Heart right ventricle (tissue), 16 donors: ENCODE measurements at regions of chr6 and their contacts with region 1.

Region 1: DNA sequence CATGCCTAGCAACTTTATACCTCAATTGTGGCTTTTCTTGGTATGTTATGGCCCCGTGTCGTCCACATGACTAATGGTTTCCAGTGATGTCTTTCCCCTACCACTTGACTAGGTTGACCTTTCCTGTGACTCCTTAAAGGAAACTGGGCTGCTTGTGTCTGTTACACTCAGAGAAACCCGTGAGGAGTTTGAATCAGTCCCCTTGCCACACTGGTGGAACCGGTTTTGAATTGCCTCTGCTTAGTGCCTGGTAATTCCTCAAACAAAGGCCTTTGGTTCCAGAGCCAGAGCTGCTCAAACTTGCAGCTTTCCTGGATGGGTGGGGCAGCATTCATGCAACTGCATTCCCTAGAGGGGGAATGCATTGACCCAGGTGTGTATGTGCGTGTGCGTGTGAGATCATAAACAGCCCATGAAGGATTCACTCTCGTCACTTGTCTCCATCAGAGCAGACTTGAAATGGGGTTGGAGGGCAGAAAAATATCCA is 22.0 kb downstream of the ECT2L start:
- DNase-seq: no peak
- ATAC-seq: peak in 2 of 8 donors; percentile 27 to 43
- H3K4me3 ChIP-seq: no peak overlapping the region
- H3K27ac ChIP-seq: no peak overlapping the region
- H3K4me1 ChIP-seq: peaks cover 0 to 17% (median 0%) of the 10 kb centered on the region in 9 donors
- H3K27me3 ChIP-seq: no peaks in the 10 kb centered on the region
- CTCF ChIP-seq: no peak

Region 2: DNA sequence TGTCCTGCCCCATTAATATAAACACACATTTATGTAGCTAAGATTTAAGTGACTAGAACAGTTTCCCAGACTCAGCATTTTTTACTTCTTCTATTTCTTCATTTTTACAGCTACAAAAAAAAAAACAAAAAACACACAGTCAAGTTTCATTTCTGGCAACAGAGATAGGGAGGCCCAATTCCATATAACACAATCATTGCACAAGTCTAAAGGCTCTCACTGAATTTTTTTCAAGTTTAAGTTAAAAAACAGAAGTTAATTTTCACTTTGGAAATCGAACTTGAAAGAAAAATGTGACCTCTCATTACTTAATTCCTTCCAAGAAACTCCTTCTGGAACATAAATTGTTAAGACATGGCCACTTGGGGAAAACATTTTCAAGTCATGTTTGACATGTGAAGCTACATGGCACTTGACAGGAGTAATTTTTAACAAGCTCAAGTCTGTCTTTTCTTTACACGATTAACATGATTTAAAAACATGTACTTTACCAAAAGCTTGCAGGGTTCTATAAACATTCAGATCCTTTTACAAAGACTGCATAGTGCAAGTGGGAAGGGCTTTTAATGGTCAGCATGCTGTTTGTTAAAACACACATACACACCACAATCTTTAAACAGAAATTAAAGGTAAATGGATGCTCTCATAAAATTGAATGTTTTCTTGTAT is 144.4 kb before region 1 on chr6:
- intact Hi-C with region 1: no loop called
- DNase-seq: no peak
- ATAC-seq: peak in 1 of 8 donors; percentile 20
- H3K4me3 ChIP-seq: no peak overlapping the region
- H3K27ac ChIP-seq: peak overlapping the region in 1 of 10 donors; percentile 60
- H3K4me1 ChIP-seq: no peaks in the 10 kb centered on the region
- H3K27me3 ChIP-seq: no peaks in the 10 kb centered on the region
- CTCF ChIP-seq: no peak

Region 3: GRCh38 chr6:138923561-138923960 is 105.7 kb after region 1 on chr6:
- intact Hi-C with region 1: loop called in 1 of 10 experiments (anchors 10 kb)
- DNase-seq: no peak
- ATAC-seq: no peak
- H3K4me3 ChIP-seq: no peak overlapping the region
- H3K27ac ChIP-seq: no peak overlapping the region
- H3K4me1 ChIP-seq: no peaks in the 10 kb centered on the region
- H3K27me3 ChIP-seq: no peaks in the 10 kb centered on the region
- CTCF ChIP-seq: no peak

Region 4: GRCh38 chr6:139109558-139109957 is 291.7 kb after region 1 on chr6:
- intact Hi-C with region 1: loop called in 7 of 10 experiments (anchors 5 to 10 kb)
- DNase-seq: peak; percentile 18 to 37
- ATAC-seq: peak in 3 of 8 donors; percentile 19 to 47 (median 46)
- H3K4me3 ChIP-seq: no peak overlapping the region
- H3K27ac ChIP-seq: no peak overlapping the region
- H3K4me1 ChIP-seq: no peaks in the 10 kb centered on the region
- H3K27me3 ChIP-seq: no peaks in the 10 kb centered on the region
- CTCF ChIP-seq: peak in 8 of 9 donors; percentile 20 to 62 (median 44)

Region 5: DNA sequence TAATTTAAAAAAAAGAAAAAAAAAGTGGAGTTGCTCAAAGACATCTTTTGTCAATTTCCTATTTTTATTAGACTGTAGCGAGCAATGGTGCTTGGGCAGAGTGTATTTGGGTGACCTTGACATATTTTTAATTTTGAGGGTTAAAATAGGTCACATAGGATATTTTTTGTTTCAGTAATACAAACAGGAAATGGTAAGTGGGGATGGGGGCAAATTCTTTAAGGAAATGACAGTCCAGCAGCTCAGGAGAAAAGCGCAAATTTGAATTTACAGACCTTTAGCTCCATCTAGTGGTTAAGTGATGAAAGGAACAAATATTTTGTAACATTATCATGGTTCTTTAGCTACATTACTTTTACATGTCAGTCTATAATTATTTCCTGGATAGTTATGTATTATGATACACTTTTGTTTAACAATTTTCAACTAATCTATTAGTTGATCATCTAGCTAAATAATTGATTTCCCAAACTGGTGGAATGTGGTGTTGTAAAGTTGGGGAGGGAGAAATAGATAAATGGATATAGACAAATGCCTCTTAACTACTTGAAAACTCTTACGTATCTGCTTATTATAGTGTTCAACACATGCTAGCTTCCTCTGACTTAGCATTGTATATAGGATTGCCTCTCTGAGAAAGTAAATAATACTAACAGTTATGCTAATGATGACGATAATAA is 546.6 kb after region 1 on chr6:
- intact Hi-C with region 1: loop called in 9 of 10 experiments (anchors 2 to 10 kb)
- DNase-seq: no peak
- ATAC-seq: peak in 6 of 8 donors; percentile 27 to 75 (median 49)
- H3K4me3 ChIP-seq: no peak overlapping the region
- H3K27ac ChIP-seq: peak overlapping the region in 1 of 10 donors; percentile 2
- H3K4me1 ChIP-seq: peaks cover 0 to 28% (median 14%) of the 10 kb centered on the region in 9 donors
- H3K27me3 ChIP-seq: no peaks in the 10 kb centered on the region
- CTCF ChIP-seq: peak; percentile 65 to 88 (median 78)